Naive thymus-derived CD4-positive, alpha-beta T cell (primary cell): ENCODE measurements at regions of chr11 and their contacts with region 1.

Region 1: DNA sequence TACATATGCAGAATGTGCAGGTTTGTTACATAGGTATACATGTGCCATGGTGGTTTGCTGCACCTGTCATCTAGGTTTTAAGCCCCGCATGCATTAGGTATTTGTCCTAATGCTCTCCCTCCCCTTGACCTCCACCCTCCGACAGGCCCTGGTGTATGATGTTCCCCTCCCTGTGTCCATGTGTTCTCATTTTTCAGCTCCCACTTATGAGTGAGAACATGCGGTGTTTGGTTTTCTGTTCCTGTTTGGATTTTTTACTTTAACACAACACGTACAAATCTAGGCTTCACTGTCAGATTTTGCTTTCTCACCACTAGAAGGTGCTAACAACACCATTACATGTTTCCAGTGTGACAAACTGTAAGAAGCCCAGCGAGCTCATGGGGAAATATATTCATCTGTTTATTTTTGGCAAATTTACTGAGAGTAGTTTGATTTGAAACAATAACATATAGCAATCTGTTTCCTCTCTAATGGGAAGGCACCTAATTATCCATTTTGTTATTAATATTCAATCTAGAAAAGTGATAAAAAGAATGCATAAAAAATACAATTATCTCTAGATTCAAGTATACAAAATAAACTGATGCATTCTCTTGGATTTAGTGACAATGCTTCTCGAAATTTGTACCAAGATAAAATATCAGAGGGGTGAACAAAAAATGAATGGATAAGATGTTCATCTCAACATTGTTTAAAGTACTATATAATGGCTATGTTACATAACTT is 23.2 kb upstream of the BIRC3 start:
- DNase-seq: peak in 7 of 9 donors; percentile 50 to 75 (median 66)
- ATAC-seq: peak; percentile 98
- H3K4me3 ChIP-seq: peak overlapping the region; percentile 49
- H3K4me3 Mint-ChIP-seq: peak overlapping the region; percentile 62 to 97 (median 82)
- H3K27ac ChIP-seq: peak overlapping the region; percentile 49
- H3K27ac Mint-ChIP-seq: peak overlapping the region; percentile 77 to 95 (median 91)
- H3K4me1 ChIP-seq: peaks cover 7 to 9% of the 10 kb centered on the region in 2 donors
- H3K4me1 Mint-ChIP-seq: peaks cover 10 to 44% (median 40%) of the 10 kb centered on the region in 7 donors
- H3K27me3 ChIP-seq: no peaks in the 10 kb centered on the region
- H3K27me3 Mint-ChIP-seq: no peaks in the 10 kb centered on the region

Region 2: GRCh38 chr11:102306048-102306585 is 12.1 kb after region 1 on chr11:
- CTCF ChIA-PET with region 1: interaction called, 354 read pairs
- POLR2A ChIA-PET with region 1: interaction called, 158 read pairs
- intact Hi-C with region 1: loop called (anchors 1 kb)
- DNase-seq: peak in 1 of 9 donors; percentile 30
- ATAC-seq: peak; percentile 23
- H3K4me3 ChIP-seq: peak overlapping the region; percentile 14
- H3K4me3 Mint-ChIP-seq: peak overlapping the region; percentile 46 to 84 (median 64)
- H3K27ac ChIP-seq: peak overlapping the region; percentile 68
- H3K27ac Mint-ChIP-seq: peak overlapping the region; percentile 87 to 96 (median 93)
- H3K4me1 ChIP-seq: peaks cover 49 to 76% of the 10 kb centered on the region in 2 donors
- H3K4me1 Mint-ChIP-seq: peaks cover 41 to 80% (median 67%) of the 10 kb centered on the region in 7 donors
- H3K27me3 ChIP-seq: no peaks in the 10 kb centered on the region
- H3K27me3 Mint-ChIP-seq: no peaks in the 10 kb centered on the region

Region 3: DNA sequence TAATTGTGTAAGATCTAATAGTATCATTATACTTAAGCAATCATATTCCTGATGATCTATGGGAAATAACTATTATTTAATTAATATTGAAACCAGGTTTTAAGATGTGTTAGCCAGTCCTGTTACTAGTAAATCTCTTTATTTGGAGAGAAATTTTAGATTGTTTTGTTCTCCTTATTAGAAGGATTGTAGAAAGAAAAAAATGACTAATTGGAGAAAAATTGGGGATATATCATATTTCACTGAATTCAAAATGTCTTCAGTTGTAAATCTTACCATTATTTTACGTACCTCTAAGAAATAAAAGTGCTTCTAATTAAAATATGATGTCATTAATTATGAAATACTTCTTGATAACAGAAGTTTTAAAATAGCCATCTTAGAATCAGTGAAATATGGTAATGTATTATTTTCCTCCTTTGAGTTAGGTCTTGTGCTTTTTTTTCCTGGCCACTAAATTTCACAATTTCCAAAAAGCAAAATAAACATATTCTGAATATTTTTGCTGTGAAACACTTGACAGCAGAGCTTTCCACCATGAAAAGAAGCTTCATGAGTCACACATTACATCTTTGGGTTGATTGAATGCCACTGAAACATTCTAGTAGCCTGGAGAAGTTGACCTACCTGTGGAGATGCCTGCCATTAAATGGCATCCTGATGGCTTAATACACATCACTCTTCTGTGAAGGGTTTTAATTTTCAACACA is 29.7 kb after region 1 on chr11:
- CTCF ChIA-PET with region 1: interaction called, 354 read pairs
- POLR2A ChIA-PET with region 1: interaction called, 158 read pairs
- intact Hi-C with region 1: no loop called
- DNase-seq: no peak
- ATAC-seq: no peak
- H3K4me3 ChIP-seq: no peak overlapping the region
- H3K4me3 Mint-ChIP-seq: peak overlapping the region in 4 of 10 donors; percentile 7 to 81 (median 46)
- H3K27ac ChIP-seq: peak overlapping the region; percentile 56
- H3K27ac Mint-ChIP-seq: peak overlapping the region in 7 of 9 donors; percentile 42 to 94 (median 67)
- H3K4me1 ChIP-seq: peaks cover 23 to 39% of the 10 kb centered on the region in 2 donors
- H3K4me1 Mint-ChIP-seq: peaks cover 33 to 76% (median 63%) of the 10 kb centered on the region in 7 donors
- H3K27me3 ChIP-seq: no peaks in the 10 kb centered on the region
- H3K27me3 Mint-ChIP-seq: no peaks in the 10 kb centered on the region